Caco-2 (cell line): ENCODE measurements at regions of chr6 and their contacts with region 1.

Region 1: DNA sequence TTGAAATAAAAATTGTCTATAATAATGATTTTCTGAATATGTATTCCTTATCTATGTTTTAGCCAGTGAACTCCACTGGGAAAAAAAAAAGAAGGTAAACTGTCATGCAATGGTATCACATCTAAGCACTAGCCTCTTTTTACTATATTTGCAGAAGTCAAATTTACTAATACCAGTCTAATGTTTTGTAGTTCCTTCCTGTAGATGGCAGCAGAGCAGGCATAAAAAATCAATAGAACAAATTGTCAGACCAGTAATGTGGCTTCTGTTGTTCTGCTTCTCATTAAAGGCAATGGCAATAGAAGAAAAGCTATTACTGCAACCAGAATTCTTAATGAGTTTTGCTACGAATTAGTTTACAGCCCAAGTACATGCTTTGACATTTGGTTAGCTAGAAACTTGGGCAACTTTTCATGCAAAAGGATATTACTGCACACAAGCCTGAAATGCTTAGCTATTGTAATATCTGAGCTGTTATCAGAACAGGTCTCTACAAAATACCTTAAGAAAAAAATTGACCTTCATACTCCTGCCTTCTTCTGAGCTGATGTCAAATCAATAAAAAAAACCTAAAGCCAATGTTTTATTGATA is 476.9 kb downstream of the KHDRBS2 start:
- DNase-seq: peak in 1 of 2 experiments; percentile 37
- H3K4me3 ChIP-seq: no peak overlapping the region
- H3K4me3 Mint-ChIP-seq: no peak overlapping the region
- H3K27ac Mint-ChIP-seq: no peak overlapping the region
- H3K4me1 ChIP-seq: no peaks in the 10 kb centered on the region
- H3K4me1 Mint-ChIP-seq: no peaks in the 10 kb centered on the region
- H3K27me3 ChIP-seq: no peaks in the 10 kb centered on the region
- H3K27me3 Mint-ChIP-seq: no peaks in the 10 kb centered on the region
- CTCF ChIP-seq: peak; percentile 52 to 53

Region 2: GRCh38 chr6:62283796-62284411 is 474.8 kb after region 1 on chr6:
- CTCF ChIA-PET with region 1: no interaction called
- POLR2A ChIA-PET with region 1: no interaction called
- intact Hi-C with region 1: loop called (anchors 1 kb)
- DNase-seq: peak in 1 of 2 experiments; percentile 40
- H3K4me3 ChIP-seq: no peak overlapping the region
- H3K4me3 Mint-ChIP-seq: no peak overlapping the region
- H3K27ac Mint-ChIP-seq: no peak overlapping the region
- H3K4me1 ChIP-seq: no peaks in the 10 kb centered on the region
- H3K4me1 Mint-ChIP-seq: no peaks in the 10 kb centered on the region
- H3K27me3 ChIP-seq: no peaks in the 10 kb centered on the region
- H3K27me3 Mint-ChIP-seq: no peaks in the 10 kb centered on the region
- CTCF ChIP-seq: peak; percentile 57 to 70